ENCODE measurements at regions of chr4 and their contacts with region 1.

Region 1: GRCh38 chr4:112099701-112100297 is 45.5 kb upstream of the FAM241A start:
- DNase-seq: peak in 1 of 2 donors; percentile 74
- H3K4me3 ChIP-seq: no peak overlapping the region
- H3K27ac ChIP-seq: peak overlapping the region in 1 of 5 donors; percentile 4
- H3K4me1 ChIP-seq: peaks cover 0 to 17% (median 8%) of the 10 kb centered on the region in 4 donors
- H3K27me3 ChIP-seq: no peaks in the 10 kb centered on the region
- CTCF ChIP-seq: peak in 4 of 7 experiments; percentile 40 to 73 (median 62)
- EP300 ChIP-seq: no peak
- POLR2A ChIP-seq: no peak

Region 2: GRCh38 chr4:111854494-111855087 is 245.2 kb before region 1 on chr4:
- intact Hi-C with region 1: no loop called
- DNase-seq: peak in 1 of 2 donors; percentile 74
- H3K4me3 ChIP-seq: no peak overlapping the region
- H3K27ac ChIP-seq: no peak overlapping the region
- H3K4me1 ChIP-seq: no peaks in the 10 kb centered on the region
- H3K27me3 ChIP-seq: no peaks in the 10 kb centered on the region
- CTCF ChIP-seq: peak in 2 of 7 experiments; percentile 36 to 44
- EP300 ChIP-seq: no peak
- POLR2A ChIP-seq: no peak

Region 3: DNA sequence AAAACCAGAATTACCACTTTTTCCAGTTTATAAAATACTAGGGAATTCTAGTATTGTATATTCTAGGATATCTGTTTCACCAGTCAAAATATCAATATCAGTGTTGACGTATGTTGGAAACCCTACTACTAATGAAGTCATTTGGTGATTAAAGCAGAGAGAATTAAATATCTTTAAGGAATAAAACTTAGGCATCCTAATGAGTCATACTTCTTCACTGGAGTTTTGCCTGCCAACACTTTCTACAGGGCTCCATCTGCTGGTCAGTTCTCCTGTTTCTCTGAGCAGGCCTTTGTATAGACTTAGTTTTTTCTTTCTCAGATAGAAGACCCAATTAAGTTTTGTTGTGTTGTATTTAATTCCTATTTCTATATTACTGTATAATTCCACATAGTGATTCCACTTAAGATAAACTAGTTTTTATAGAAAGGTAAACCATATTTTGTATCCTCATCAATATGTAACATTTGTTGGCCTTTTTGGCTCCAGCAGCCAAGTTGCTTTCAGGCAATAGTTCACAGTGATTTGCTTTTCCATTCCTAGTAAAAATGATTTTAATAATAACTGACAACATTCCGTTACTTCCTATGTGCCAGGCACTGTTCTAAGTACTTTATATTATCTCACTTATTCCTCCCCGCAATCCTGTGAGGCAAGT is 135.3 kb after region 1 on chr4:
- intact Hi-C with region 1: loop called (anchors 5 kb)
- DNase-seq: peak; percentile 74 to 91
- H3K4me3 ChIP-seq: no peak overlapping the region
- H3K27ac ChIP-seq: no peak overlapping the region
- H3K4me1 ChIP-seq: peaks cover 5 to 43% (median 18%) of the 10 kb centered on the region in 4 donors
- H3K27me3 ChIP-seq: no peaks in the 10 kb centered on the region
- CTCF ChIP-seq: peak in 5 of 7 experiments; percentile 33 to 72 (median 67)
- EP300 ChIP-seq: no peak
- POLR2A ChIP-seq: no peak